HEK293 (cell line): ENCODE measurements at regions of chr1 and their contacts with region 1.

Region 1: DNA sequence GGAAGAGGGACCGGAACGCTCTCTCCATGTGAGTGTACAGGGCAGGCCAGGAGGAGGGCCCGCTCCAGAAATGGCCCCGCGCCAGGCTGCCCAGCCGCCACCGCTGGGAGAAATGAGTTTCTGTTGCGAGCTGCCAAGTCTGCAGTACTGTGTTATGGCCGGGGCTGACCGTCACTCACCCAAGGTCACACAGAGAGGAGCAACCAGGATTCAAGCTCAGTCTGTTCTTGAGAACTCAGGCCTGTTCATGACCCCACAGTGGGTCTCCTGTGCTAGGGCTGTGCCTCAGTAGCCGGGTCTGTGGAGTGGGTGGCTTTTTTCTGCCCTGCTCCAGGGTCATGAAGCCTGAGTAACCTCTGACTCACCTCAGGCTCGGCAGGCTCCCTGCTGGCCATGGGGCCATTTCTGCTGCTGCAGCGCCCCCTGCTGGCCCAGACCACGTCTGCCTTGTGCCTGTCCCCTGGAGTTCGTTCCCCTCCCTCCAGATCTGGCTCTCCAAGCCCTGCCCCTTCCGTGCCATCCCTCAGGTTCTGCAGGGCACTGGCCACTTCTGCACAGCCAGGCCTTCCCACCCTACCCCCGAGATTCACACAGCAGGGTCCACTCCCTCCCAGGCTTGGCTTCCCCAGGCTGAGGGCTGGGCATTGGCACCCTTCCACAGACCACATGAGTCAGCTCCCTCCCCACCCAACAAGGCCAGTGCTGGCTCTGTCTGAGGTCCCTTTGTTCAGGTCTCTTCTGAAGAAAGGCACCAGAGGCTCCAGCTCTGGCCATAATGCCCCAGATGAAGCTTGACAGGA is 51.8 kb downstream of the EDN2 start:
- H3K4me3 ChIP-seq: no peak overlapping the region
- H3K27ac ChIP-seq: no peak overlapping the region
- H3K4me1 ChIP-seq: no peaks in the 10 kb centered on the region
- CTCF ChIP-seq: peak; percentile 95

Region 2: DNA sequence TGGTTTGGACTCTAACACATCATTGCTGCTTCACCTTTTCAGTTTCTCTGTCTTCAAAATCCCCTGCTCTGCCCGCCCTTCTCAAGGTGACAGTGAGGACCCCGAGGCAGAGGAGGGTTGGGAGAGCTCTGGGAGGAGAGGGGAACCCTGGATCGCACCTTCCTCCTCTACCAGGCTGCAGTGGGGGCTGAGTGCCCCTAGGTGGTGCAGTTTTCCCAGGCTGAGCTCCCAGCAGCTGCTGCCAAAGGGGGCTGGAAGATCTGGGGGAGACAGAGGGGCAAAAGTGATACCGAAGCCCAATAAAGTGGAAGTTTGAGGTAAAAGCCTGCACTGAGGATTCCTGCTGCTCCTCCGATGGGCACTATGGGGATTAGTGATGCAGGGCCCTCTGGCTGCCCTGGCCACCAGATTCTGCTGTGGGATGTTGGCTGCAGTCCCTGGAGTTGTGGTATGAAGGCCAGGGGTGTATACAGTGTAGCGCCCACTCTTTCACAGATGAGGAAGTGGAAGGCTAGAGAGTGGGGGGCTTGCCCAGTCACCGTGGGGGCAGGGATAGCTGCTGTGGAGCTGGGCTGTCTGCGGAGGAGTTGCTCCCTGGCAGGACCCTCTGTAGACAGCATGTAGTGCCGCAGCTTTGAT is 149.9 kb before region 1 on chr1:
- CTCF ChIA-PET with region 1: interaction called, 53 read pairs
- POLR2A ChIA-PET with region 1: no interaction called
- H3K4me3 ChIP-seq: no peak overlapping the region
- H3K27ac ChIP-seq: no peak overlapping the region
- H3K4me1 ChIP-seq: no peaks in the 10 kb centered on the region
- CTCF ChIP-seq: peak; percentile 68

Region 3: GRCh38 chr1:41313661-41314131 is 119.0 kb before region 1 on chr1:
- CTCF ChIA-PET with region 1: interaction called, 24 read pairs
- POLR2A ChIA-PET with region 1: no interaction called
- H3K4me3 ChIP-seq: no peak overlapping the region
- H3K27ac ChIP-seq: no peak overlapping the region
- H3K4me1 ChIP-seq: no peaks in the 10 kb centered on the region
- CTCF ChIP-seq: no peak

Region 4: DNA sequence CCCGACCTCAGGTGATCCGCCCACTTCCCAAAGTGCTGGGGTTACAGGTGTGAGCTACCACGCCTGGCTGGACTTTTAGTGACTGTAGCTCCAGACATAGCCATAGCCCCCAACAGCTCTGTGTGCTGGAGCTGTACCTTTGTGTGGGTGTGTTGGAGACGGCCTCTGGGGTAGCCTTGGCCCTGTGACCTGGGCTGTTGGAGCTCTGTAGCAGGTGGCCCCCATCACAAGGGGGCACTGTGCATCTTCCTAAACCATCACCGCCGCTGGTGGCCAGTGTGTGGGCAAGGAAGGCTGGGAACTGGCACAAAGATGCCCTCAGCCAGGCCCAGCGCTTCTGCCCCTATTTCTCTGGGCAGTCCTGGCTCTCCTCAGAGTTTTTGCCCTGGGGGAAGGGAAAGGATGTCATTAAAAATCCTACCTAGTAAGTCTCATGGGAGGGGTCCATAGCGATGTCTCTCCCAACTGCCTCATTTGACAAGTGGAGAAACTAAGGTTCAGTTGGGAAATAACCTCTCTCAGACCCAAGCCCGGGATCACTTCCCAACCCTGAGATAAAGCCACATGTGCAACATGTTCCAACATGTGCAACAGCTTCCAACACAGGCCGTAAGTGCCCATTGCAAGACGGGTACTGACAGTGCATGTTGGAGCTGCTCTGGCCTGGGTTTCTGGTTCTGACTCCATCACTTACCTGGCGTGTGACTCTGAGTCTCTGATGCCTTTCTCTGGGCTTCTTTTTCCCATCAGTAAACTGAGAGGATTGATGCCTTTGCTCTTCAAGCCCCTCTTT is 109.7 kb before region 1 on chr1:
- CTCF ChIA-PET with region 1: interaction called, 47 read pairs
- POLR2A ChIA-PET with region 1: no interaction called
- H3K4me3 ChIP-seq: no peak overlapping the region
- H3K27ac ChIP-seq: no peak overlapping the region
- H3K4me1 ChIP-seq: no peaks in the 10 kb centered on the region
- CTCF ChIP-seq: peak; percentile 70

Region 5: GRCh38 chr1:41360993-41361753 is 71.5 kb before region 1 on chr1 and contains the start of gene FOXO6:
- CTCF ChIA-PET with region 1: interaction called, 12 read pairs
- POLR2A ChIA-PET with region 1: no interaction called
- H3K4me3 ChIP-seq: peak within 1 kb of the TSS; percentile 49
- H3K27ac ChIP-seq: peak within 1 kb of the TSS; percentile 69; the same call in 1 of the 2 replicates
- H3K4me1 ChIP-seq: peaks cover 9% of the 10 kb centered on the region
- CTCF ChIP-seq: peak; percentile 41; the same call in 1 of the 2 replicates

Region 6: GRCh38 chr1:41416552-41417334 is 15.9 kb before region 1 on chr1:
- CTCF ChIA-PET with region 1: interaction called, 73 read pairs
- POLR2A ChIA-PET with region 1: interaction called, 6 read pairs
- H3K4me3 ChIP-seq: no peak overlapping the region
- H3K27ac ChIP-seq: no peak overlapping the region
- H3K4me1 ChIP-seq: no peaks in the 10 kb centered on the region
- CTCF ChIP-seq: peak; percentile 93

Region 7: GRCh38 chr1:41444246-41444645 is 11.6 kb after region 1 on chr1:
- CTCF ChIA-PET with region 1: interaction called, 23 read pairs
- POLR2A ChIA-PET with region 1: interaction called, 3 read pairs
- H3K4me3 ChIP-seq: no peak overlapping the region
- H3K27ac ChIP-seq: no peak overlapping the region
- H3K4me1 ChIP-seq: no peaks in the 10 kb centered on the region
- CTCF ChIP-seq: no peak